Right ventricle myocardium inferior (tissue), 1 donor: ENCODE measurements at regions of chr7 and their contacts with region 1.

Region 1: DNA sequence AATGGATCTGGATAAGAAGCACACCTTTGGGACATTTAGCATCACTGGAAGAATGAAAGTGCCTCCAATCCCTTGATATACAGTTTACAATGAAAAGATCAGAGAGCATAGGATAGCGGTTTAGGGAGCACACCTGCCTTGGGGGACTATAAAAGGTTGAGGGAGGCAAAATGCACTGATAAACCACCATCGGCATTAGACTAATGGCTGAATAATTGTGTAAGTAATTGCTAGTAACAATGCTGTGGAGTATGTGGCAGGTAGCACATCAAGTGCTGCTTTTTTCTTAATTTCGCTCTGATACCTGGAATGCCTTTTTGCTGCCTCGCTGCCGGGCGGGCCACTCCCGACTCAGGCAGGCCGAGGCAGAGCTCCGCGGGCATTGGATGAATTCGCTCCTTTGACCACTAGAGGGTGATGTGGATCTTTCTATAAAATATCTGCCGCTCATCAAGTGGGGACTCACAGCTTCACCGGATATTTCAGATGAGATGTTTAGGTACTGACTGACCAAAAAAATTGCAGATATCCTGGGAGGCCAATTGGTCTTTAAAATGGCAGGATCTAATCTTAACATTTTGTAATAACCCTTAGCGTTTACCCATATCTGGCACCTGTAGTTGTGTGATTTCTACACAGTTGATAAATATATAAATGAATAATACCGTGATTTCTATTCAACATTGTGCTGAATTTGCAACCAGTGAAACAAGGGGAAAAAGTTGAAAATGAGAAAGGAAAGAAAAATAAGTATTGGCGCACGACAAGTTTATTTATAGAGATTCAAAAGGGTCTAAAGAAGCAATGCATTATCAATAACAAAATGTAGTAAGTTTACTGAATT is 116.8 kb upstream of the PRSS1 start:
- DNase-seq: peak; percentile 56
- ATAC-seq: no peak

Region 2: GRCh38 chr7:142711746-142712619 is 79.5 kb after region 1 on chr7:
- intact Hi-C with region 1: loop called (anchors 5 kb)
- DNase-seq: no peak
- ATAC-seq: no peak

Region 3: GRCh38 chr7:142811154-142811737 is 178.7 kb after region 1 on chr7:
- intact Hi-C with region 1: loop called (anchors 5 kb)
- DNase-seq: no peak
- ATAC-seq: peak; percentile 33